GM10248 (cell line): ENCODE measurements at regions of chr1 and their contacts with region 1.

Region 1: GRCh38 chr1:151130987-151131586 is 15.3 kb downstream of the SEMA6C start:
- DNase-seq: peak; percentile 91
- CTCF ChIP-seq: no peak

Region 2: GRCh38 chr1:151106894-151107293 is 24.2 kb before region 1 on chr1:
- CTCF ChIA-PET with region 1: interaction called, 18 read pairs
- POLR2A ChIA-PET with region 1: no interaction called
- DNase-seq: no peak
- CTCF ChIP-seq: no peak

Region 3: DNA sequence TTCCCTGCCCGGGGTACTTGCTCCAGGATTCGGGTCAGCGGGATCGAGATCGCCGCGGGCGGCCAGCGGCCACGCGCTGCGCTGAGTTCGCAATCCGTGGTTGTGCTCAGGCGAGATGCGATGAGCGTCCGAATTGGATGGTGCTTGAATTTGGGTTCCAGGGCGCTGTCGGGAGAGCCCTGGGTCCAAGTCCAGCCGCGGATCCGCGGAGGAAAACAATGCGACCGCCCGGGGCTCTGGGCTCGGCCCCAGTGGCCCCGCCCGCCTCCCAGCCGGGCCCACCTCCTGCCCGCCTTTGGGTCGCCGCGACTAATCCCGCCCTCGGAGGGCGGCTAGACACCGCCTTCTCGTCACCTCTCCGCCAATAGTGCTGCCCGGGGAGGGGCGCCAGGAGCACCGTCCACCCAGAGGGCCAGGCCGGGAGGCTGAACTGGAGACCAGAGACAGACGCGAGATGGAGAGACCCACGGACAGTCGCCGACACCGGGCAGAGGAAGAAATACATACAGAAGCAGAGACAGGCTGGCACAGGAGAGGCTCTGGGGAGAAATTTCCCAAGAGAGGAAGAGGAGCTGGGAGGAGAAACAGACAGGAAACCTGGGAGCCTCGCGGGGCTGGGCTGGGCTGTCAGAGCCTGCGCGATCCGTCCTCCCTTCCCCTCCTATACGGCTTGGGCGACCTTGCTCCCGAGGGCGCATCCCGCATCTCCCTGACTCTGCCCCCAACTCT is 15.5 kb after region 1 on chr1 and contains the start of gene SEMA6C:
- CTCF ChIA-PET with region 1: interaction called, 18 read pairs
- POLR2A ChIA-PET with region 1: no interaction called
- DNase-seq: peak; percentile 94
- CTCF ChIP-seq: no peak

Region 4: DNA sequence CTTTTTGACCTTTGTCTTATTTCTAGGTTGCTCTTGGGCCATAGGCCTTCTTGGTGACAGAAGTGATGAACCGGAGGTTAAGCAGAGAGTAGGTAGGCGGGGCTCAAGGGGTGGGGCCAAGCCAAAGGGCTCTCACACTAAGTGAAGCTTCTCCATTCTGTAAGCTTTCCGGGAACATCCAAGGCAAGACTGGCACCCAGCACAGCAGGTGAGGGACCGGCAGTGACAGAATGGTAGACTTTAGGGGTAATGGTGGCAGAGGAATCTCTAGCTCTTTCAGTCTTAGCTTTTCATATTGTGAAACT is 25.4 kb after region 1 on chr1 and contains the start of gene TNFAIP8L2:
- CTCF ChIA-PET with region 1: interaction called, 29 read pairs
- POLR2A ChIA-PET with region 1: no interaction called
- DNase-seq: peak; percentile 73
- CTCF ChIP-seq: no peak